PC-3 (cell line): ENCODE measurements at regions of chr2 and their contacts with region 1.

Region 1: GRCh38 chr2:180690611-180691010 is 289.8 kb upstream of the UBE2E3 start:
- DNase-seq: peak; percentile 76
- ATAC-seq: peak; percentile 45
- H3K4me3 ChIP-seq: no peak overlapping the region
- H3K27ac ChIP-seq: peak overlapping the region; percentile 31
- H3K4me1 ChIP-seq: peaks cover 38% of the 10 kb centered on the region
- H3K27me3 ChIP-seq: no peaks in the 10 kb centered on the region
- CTCF ChIP-seq: no peak

Region 2: GRCh38 chr2:180443888-180444287 is 246.7 kb before region 1 on chr2:
- CTCF ChIA-PET with region 1: no interaction called
- POLR2A ChIA-PET with region 1: no interaction called
- intact Hi-C with region 1: no loop called
- DNase-seq: no peak
- ATAC-seq: no peak
- H3K4me3 ChIP-seq: no peak overlapping the region
- H3K27ac ChIP-seq: no peak overlapping the region
- H3K4me1 ChIP-seq: no peaks in the 10 kb centered on the region
- H3K27me3 ChIP-seq: no peaks in the 10 kb centered on the region
- CTCF ChIP-seq: no peak

Region 3: GRCh38 chr2:180573958-180574357 is 116.7 kb before region 1 on chr2:
- CTCF ChIA-PET with region 1: no interaction called
- POLR2A ChIA-PET with region 1: no interaction called
- intact Hi-C with region 1: loop called (anchors 5 kb)
- DNase-seq: peak; percentile 97
- ATAC-seq: peak; percentile 89
- H3K4me3 ChIP-seq: no peak overlapping the region
- H3K27ac ChIP-seq: peak overlapping the region; percentile 73
- H3K4me1 ChIP-seq: peaks cover 48% of the 10 kb centered on the region
- H3K27me3 ChIP-seq: no peaks in the 10 kb centered on the region
- CTCF ChIP-seq: no peak

Region 4: GRCh38 chr2:180670302-180671003 is 20.2 kb before region 1 on chr2:
- CTCF ChIA-PET with region 1: no interaction called
- POLR2A ChIA-PET with region 1: no interaction called
- intact Hi-C with region 1: no loop called
- DNase-seq: no peak
- ATAC-seq: no peak
- H3K4me3 ChIP-seq: no peak overlapping the region
- H3K27ac ChIP-seq: no peak overlapping the region
- H3K4me1 ChIP-seq: peaks cover 10% of the 10 kb centered on the region
- H3K27me3 ChIP-seq: no peaks in the 10 kb centered on the region
- CTCF ChIP-seq: no peak

Region 5: DNA sequence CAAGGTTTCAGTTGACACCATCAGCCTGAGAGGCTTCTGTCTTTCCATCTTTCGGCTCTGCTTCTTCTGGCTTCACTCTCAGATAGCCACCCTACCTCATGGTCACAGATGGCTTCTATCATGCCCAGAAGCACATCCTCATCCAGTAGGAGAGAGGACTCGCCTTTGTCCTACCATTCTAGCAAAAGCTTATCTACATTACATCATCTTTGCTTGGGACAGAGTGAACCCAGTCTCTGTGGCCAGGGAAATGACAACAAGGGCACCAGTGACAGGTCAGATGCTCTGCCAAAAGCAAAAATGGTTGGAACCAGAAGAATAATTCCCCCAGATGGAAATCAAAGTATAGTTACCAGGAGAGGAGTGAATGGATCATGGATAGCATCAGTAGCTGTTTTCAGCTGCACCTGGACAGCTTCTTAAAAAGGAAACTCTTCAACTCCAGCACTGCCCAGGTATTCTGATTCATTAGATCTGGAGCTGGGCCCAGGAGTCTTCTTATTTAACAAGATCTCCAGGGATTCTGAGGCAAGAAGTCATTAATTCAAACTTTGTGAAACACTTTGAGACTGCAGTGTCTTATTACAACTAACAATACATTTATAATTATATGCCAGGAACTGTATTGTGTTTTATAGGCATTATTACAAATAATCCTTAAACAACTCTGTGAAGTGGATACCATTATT is 32.1 kb after region 1 on chr2:
- CTCF ChIA-PET with region 1: interaction called, 3 read pairs
- POLR2A ChIA-PET with region 1: interaction called, 3 read pairs
- intact Hi-C with region 1: loop called (anchors 1 kb)
- DNase-seq: peak; percentile 77
- ATAC-seq: peak; percentile 84
- H3K4me3 ChIP-seq: no peak overlapping the region
- H3K27ac ChIP-seq: peak overlapping the region; percentile 71
- H3K4me1 ChIP-seq: peaks cover 27% of the 10 kb centered on the region
- H3K27me3 ChIP-seq: no peaks in the 10 kb centered on the region
- CTCF ChIP-seq: no peak

Region 6: GRCh38 chr2:180742809-180743208 is 52.2 kb after region 1 on chr2:
- CTCF ChIA-PET with region 1: no interaction called
- POLR2A ChIA-PET with region 1: no interaction called
- intact Hi-C with region 1: loop called (anchors 5 kb)
- DNase-seq: peak; percentile 87
- ATAC-seq: peak; percentile 85
- H3K4me3 ChIP-seq: peak overlapping the region; percentile 34
- H3K27ac ChIP-seq: peak overlapping the region; percentile 86
- H3K4me1 ChIP-seq: peaks cover 37% of the 10 kb centered on the region
- H3K27me3 ChIP-seq: no peaks in the 10 kb centered on the region
- CTCF ChIP-seq: no peak

Region 7: GRCh38 chr2:180763263-180763989 is 72.8 kb after region 1 on chr2:
- CTCF ChIA-PET with region 1: no interaction called
- POLR2A ChIA-PET with region 1: no interaction called
- intact Hi-C with region 1: loop called (anchors 1 kb)
- DNase-seq: peak; percentile 78
- ATAC-seq: peak; percentile 84
- H3K4me3 ChIP-seq: no peak overlapping the region
- H3K27ac ChIP-seq: peak overlapping the region; percentile 66
- H3K4me1 ChIP-seq: peaks cover 38% of the 10 kb centered on the region
- H3K27me3 ChIP-seq: no peaks in the 10 kb centered on the region
- CTCF ChIP-seq: no peak